ENCODE measurements at regions of chr11 and their contacts with region 1.

Region 1: DNA sequence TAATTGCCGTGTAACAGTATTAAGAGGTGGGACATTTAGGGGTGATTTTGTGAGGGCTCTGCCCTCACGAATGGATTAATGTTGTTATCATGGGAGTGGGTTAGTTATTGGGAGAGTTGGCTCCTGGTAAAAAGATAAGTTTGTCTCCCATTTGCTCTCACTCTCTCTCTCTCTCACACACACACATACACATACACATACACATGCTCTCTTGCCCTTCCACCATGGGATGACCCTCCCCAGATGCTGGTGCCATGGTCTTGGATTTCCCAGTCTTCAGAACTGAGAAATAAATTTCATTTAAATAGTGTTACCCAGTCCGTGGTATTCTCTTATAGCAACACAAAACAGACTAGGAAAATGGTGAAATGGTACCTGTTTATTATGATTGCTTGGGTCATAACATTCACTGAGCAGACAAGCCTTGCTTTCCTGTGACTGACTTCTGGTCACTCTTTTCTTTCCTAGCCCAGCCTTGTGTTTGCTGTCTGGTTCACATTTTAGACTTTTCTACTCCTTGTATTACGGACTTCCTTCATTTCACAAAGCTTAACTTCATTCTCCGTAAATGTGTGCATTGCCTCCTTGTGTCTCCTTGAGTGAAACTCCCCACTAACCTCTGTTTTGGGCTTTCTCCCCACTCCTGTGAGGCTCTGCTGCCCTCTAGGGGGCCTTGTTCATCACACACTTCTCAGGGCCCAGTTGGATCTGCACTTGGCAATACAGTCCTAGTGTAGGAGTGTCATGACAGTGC is 206.5 kb upstream of the CTSC start:
- DNase-seq: peak; percentile 54
- H3K4me3 ChIP-seq: no peak overlapping the region
- H3K27ac ChIP-seq: no peak overlapping the region
- H3K4me1 ChIP-seq: no peaks in the 10 kb centered on the region
- H3K27me3 ChIP-seq: no peaks in the 10 kb centered on the region
- CTCF ChIP-seq: peak; percentile 59 to 92 (median 74)
- POLR2A ChIP-seq: no peak

Region 2: DNA sequence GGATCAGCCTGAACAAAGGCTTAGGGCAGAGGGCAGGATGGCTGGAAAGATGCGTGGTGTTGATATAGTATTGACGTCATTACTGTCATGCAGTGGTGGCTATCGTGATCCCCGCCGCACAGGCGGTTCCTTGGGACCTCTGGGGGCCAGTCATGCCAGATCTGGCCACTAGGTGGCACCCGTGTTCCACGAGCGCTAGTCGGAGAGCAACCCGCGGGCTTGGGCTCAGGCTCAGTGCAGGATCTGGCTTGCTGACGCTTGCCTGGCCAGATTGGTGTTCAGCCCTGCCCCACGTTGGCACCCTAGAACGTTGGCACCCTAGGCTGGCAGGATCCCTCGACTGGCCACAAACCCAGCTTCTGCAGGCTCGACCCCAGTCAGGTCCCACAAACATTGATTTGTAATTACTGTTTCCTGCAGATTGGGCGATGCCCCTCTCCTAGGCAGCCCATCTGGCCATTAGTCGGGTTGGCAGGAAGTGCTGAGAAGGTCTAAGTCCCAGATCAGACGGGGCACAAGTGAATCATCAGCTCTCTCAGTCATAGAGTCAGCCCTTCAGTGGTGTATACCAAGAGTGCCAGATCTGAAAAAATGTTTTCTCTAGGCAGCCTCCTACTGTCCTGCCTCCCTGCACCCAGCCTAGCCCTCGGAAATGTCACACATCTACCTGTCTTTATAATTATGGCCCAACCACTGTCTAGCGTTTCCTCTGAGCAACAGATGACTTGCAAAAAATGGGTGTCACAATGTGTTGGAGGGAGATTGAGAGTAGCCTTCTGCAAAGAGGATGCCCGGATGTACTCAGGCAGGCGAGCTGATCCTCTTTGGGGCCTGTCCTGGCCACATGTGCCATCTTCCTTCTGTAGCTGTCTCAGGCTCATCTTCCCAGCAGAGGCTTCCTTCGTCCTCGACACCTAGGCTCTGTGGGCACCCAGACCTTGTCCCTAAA is 1191.0 kb before region 1 on chr11:
- intact Hi-C with region 1: loop called (anchors 5 kb)
- DNase-seq: peak; percentile 76
- H3K4me3 ChIP-seq: no peak overlapping the region
- H3K27ac ChIP-seq: no peak overlapping the region
- H3K4me1 ChIP-seq: no peaks in the 10 kb centered on the region
- H3K27me3 ChIP-seq: no peaks in the 10 kb centered on the region
- CTCF ChIP-seq: peak; percentile 96 to 97 (median 96)
- POLR2A ChIP-seq: no peak

Region 3: DNA sequence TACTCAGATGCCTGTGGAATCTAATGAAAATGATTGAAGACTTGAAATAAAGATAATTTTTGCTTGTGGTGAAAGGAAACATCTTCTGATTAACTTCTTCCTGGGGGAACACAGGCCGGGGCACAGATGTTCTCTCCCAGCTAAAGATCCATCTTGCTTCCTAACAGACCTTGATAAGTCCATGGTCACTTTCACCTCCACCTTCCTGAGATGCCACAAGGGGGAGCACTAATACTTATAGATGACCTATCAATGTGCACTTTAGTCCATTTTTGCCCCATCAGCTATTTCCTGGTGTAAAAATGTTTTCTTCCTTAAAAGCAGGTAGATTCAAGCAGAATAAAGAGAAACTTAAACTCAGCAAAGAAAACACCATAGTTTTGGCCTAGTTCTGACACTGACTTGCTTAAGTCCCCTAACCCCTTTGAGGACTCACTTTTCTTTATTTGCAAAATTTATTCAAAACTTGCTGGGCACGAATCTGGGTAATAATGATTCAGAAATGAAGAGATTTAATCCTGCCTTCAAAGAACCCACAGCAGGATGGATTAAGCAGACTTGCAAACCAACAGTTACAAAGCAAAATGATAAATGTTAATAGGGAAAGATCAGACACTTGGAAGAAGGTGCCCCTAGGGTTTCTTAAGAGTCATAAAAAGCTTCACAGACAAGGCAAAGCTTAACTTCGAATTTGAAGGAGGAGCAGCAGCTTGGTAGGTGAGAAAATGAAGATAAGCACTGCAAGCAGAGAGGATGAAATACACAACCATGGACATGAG is 527.5 kb before region 1 on chr11:
- intact Hi-C with region 1: loop called (anchors 1 kb)
- DNase-seq: peak; percentile 77
- H3K4me3 ChIP-seq: no peak overlapping the region
- H3K27ac ChIP-seq: no peak overlapping the region
- H3K4me1 ChIP-seq: no peaks in the 10 kb centered on the region
- H3K27me3 ChIP-seq: no peaks in the 10 kb centered on the region
- CTCF ChIP-seq: peak; percentile 31 to 64 (median 63)
- POLR2A ChIP-seq: no peak

Region 4: DNA sequence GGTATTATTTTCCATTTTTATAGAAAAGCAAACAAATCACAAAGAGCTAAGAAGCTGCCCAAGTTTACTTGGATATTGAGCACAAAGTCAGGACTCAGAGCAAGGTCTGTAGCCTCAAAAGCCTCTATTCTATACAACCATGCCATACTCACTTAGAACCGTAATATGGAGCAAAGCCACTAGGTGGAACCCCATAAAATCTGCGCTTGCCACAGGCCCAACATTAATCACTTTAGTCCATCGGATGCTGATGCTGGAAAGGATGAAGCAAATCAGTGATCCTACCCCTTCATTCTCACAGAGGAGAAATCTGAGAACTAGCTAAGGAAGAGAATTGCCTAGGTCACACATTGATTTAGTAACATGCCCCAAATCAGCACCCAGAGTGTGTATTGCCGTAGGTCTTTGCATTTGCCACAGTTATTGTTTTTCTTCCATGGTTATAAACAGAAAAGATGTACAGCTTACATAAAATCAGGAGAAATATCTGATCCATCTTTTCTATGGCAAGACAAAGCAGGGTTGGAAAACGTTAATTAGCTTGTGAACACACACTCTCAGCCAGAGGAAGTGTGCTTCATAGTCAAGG is 312.1 kb before region 1 on chr11:
- intact Hi-C with region 1: loop called (anchors 10 kb)
- DNase-seq: no peak
- H3K4me3 ChIP-seq: no peak overlapping the region
- H3K27ac ChIP-seq: no peak overlapping the region
- H3K4me1 ChIP-seq: no peaks in the 10 kb centered on the region
- H3K27me3 ChIP-seq: no peaks in the 10 kb centered on the region
- CTCF ChIP-seq: peak in 3 of 4 experiments; percentile 40 to 60 (median 43)
- POLR2A ChIP-seq: no peak

Region 5: DNA sequence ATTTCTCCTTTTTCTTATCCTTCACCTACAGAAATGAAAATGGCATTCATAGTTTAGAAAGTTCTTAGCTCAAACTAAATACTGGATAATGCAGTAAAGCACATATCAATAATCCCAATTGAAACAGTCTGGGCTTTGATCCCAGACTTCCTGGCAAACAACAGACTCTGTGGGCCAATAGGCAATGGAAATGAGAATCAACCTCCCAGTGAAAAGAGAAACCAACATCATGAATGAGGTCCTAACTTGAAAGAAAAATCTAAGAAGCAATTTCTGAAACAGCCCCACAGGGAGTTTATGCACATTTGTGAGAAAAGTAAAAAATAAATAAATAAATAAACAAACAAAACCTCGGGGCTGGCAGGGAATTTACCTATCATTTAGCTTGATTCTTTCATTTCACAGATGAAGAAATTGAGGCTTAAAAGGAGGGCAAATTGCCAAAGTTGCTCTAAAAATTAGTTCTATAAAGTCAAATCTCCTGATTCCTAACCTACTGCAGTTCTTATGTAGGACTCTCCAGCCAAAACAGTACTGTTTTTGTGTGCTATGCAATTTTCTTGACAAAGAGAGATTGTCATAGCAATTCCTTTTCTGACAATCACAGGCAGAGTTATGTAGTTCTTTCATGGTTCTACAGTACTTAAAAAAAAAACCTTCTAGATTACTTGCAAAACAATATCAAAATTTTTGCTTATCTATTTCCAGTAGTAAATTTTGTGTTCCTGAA is 255.9 kb after region 1 on chr11:
- intact Hi-C with region 1: no loop called
- DNase-seq: no peak
- H3K4me3 ChIP-seq: no peak overlapping the region
- H3K27ac ChIP-seq: no peak overlapping the region
- H3K4me1 ChIP-seq: no peaks in the 10 kb centered on the region
- H3K27me3 ChIP-seq: no peaks in the 10 kb centered on the region
- CTCF ChIP-seq: no peak
- POLR2A ChIP-seq: no peak

Measured in prostate gland (tissue), 2 donors.